Dendritic cell treated with granulocyte-macrophage colony-stimulating factor and Interleukin-4, amounts not matched to agents 40 ng/mL and 50 ng/mL, for 4 days (primary cell): ENCODE measurements at regions of chr17 and their contacts with region 1.

Region 1: GRCh38 chr17:77957857-77958715 is at the start of gene TNRC6C:
- H3K4me3 Mint-ChIP-seq: peak within 1 kb of the TSS; percentile 92
- H3K27ac Mint-ChIP-seq: peak within 1 kb of the TSS; percentile 61
- H3K4me1 Mint-ChIP-seq: peaks cover 22% of the 10 kb centered on the region
- H3K27me3 Mint-ChIP-seq: peaks cover 78% of the 10 kb centered on the region

Region 2: GRCh38 chr17:77869665-77870132 is 88.4 kb before region 1 on chr17:
- intact Hi-C with region 1: loop called (anchors 5 kb)
- H3K4me3 Mint-ChIP-seq: no peak overlapping the region
- H3K27ac Mint-ChIP-seq: peak overlapping the region; percentile 12
- H3K4me1 Mint-ChIP-seq: peaks cover 70% of the 10 kb centered on the region
- H3K27me3 Mint-ChIP-seq: peaks cover 69% of the 10 kb centered on the region

Region 3: DNA sequence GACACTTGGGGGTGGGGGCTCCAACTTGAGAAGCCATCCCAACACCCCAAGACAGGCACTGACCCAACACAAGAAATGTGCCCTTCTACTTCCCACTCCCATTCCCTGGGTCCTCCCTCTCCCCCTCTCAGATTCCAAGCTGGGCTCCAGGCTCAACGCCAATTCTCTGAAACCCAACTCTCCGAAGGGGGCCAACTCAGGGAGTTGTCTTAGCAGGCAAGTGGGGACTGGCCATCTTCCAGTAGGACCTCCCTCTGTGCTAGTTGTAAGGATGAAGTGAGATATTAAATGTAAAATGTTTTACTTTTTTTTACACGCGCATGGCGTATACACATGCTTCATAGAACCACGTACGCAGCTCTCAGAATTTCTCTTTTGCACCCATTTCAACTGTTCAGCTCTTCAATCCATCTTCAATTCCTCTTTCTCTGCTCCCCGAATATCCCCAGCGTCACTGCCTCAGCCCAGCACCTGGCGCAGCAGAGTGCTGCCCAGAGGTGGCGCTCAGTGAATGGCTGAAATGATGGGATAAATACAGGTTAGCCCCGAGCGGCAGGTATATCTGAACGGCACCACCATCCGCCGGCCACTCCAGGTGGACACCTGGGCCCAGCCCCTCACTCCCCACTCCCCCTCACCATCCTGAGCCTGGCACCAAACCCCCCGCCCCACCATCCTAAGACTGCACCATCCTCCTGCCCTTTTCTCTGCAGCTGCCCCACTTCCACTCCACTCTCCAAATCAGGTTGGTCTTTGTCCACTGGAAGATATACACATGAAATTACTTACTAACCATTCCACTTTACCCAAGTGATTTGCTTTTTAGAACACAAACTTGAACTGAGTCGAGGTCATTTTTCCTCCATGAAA is 43.5 kb before region 1 on chr17:
- intact Hi-C with region 1: loop called (anchors 5 kb)
- H3K4me3 Mint-ChIP-seq: no peak overlapping the region
- H3K27ac Mint-ChIP-seq: no peak overlapping the region
- H3K4me1 Mint-ChIP-seq: peaks cover 36% of the 10 kb centered on the region
- H3K27me3 Mint-ChIP-seq: peaks cover 92% of the 10 kb centered on the region